Naive thymus-derived CD4-positive, alpha-beta T cell (primary cell): ENCODE measurements at regions of chr3 and their contacts with region 1.

Region 1: DNA sequence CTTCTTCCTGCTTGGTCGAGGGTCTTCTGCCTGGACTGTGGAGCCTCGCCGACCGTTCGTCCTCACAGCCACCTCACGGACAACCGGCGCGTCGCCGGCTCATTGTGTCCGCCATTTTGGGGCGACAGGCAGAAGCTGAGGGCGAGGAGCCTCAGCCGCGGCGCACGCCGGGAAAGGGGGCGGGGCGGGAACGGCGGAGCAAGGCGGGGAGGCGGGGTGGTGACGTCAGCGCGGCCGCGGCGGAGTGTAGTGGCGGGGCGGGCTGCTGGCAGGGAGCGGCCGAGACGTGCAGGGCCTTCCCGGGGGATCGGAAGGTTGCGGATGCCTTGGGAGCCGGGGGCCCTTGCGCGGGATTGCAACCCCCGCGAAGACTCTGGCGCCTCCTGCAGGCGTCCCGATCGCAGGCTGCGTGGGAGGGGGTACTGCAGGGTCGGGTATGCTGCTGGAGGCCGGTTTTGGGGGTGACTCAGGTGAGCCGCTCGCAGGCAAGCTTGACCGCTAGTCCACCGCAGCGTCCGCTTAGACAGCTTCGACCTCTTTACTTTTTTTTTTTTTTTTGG is at the start of gene WDR82:
- DNase-seq: peak; percentile 92 to 100 (median 96)
- ATAC-seq: peak; percentile 93
- H3K4me3 ChIP-seq: peak within 1 kb of the TSS; percentile 92
- H3K4me3 Mint-ChIP-seq: peak within 1 kb of the TSS; percentile 91 to 99 (median 98)
- H3K27ac ChIP-seq: peak within 1 kb of the TSS; percentile 96
- H3K27ac Mint-ChIP-seq: peak within 1 kb of the TSS; percentile 93 to 99 (median 99)
- H3K4me1 ChIP-seq: peaks cover 41 to 44% of the 10 kb centered on the region in 2 donors
- H3K4me1 Mint-ChIP-seq: peaks cover 37 to 74% (median 71%) of the 10 kb centered on the region in 7 donors
- H3K27me3 ChIP-seq: no peaks in the 10 kb centered on the region
- H3K27me3 Mint-ChIP-seq: no peaks in the 10 kb centered on the region
- total RNA-seq, gene WDR82: 112 to 161 (median 135) TPM

Region 2: DNA sequence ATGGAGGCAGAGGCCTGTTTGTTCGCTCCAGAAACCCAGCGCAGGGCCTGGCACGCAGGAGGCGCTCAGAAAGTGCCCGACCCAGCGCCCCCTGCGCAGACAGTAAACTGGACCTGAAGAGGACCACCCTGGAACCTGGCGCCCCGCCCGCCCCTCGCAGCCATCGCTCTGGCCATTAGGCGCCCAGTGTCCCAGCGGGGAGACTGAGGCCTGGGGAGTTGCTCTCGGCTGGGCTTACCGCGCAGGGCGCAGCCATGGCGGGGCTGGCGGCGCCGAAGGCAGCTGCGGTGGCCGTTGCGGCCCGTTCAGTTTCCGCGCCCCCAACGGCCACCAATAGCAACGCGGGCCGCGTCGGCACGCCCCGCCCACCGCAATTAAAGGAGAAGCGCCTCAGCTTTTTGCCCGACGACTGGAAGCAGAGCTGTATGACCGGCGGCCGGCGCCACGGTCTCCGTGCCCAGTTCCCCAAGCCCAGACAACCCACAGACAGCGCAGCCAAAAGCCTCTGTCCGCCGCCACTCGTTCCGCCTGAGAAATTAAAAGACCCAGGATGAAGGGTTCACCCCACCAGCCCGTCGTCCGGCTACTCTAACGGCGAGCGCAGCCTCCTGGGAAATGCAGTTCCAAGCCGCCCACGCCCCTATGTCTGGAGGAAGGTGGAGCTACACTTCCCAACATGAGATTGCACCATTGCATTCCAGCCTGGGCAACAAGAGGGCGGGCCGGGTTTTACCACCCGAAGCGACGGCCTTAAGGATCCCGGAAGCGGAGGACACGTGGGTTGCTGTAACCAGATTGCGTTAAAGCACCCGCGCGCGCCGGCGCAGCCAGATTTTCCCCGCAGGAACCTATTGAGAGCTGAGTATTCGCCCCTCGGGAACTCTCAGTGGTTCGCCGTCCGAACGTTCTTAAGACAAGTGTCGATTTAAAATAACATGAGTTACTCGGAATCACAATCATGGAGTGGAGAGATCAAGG is 124.2 kb before region 1 on chr3 and contains the start of gene POC1A:
- CTCF ChIA-PET with region 1: no interaction called
- POLR2A ChIA-PET with region 1: no interaction called
- intact Hi-C with region 1: loop called in 1 of 2 experiments (anchors 2 kb)
- DNase-seq: peak; percentile 73 to 90 (median 82)
- ATAC-seq: peak; percentile 92
- H3K4me3 ChIP-seq: peak within 1 kb of the TSS; percentile 98
- H3K4me3 Mint-ChIP-seq: peak within 1 kb of the TSS; percentile 88 to 98 (median 96)
- H3K27ac ChIP-seq: peak within 1 kb of the TSS; percentile 85
- H3K27ac Mint-ChIP-seq: peak within 1 kb of the TSS; percentile 87 to 98 (median 94)
- H3K4me1 ChIP-seq: peaks cover 4 to 6% of the 10 kb centered on the region in 2 donors
- H3K4me1 Mint-ChIP-seq: peaks cover 5 to 22% (median 6%) of the 10 kb centered on the region in 7 donors
- H3K27me3 ChIP-seq: no peaks in the 10 kb centered on the region
- H3K27me3 Mint-ChIP-seq: peaks cover 0 to 1% (median 0%) of the 10 kb centered on the region in 5 donors
- total RNA-seq, gene POC1A: 0.58 to 19.7 (median 1.2) TPM

Region 3: DNA sequence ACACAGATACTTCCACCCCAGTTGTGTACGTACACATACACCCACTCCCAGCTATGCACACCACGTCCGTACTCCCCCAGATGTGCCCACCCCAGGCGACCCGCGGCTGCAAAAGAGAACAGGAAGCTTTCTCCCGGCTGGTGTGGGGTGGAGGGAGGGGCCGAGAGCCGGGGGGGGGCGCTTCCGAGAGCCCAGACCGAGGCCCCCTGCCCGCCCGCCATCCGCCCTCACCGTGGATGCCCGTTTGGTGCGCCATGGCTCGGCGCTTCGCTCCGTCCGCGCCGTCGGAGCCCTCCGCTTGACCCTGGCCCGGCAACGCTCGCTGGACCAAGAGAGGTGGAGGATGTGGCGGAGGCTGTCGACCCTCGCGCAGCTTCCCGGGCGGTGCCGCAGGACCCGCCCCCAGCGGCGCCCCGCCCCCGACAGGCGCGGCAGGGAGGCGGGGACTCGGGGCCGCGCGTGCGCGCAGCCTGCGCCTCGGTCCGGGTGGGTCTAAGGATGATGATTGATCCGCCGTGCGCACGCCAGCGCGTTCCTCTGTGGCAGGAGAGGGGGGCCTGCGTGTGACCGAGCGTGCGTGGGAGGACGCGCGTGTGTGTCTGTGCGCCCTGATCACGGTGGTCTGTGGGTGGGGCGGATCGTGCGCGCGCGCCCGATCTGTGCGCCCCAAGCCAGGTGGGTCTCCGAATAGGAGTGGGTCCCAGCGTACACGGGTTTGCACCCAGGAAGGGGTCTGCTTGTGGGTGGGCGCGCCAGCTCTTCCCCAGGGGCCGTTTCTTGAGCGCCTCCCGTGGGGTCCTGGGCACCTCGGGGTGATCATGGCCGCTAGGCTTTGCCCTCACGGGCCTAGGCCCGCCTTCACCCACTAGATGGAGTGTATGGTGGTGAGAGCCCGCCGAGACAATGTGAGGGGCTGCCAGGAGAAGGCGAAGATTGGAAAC is 39.6 kb before region 1 on chr3 and contains the start of gene TWF2:
- CTCF ChIA-PET with region 1: interaction called, 126 read pairs
- POLR2A ChIA-PET with region 1: interaction called, 1,418 read pairs
- intact Hi-C with region 1: loop called (anchors 1 kb)
- DNase-seq: peak; percentile 87 to 96 (median 91)
- ATAC-seq: peak; percentile 91
- H3K4me3 ChIP-seq: peak within 1 kb of the TSS; percentile 92
- H3K4me3 Mint-ChIP-seq: peak within 1 kb of the TSS; percentile 86 to 100 (median 96)
- H3K27ac ChIP-seq: peak within 1 kb of the TSS; percentile 95
- H3K27ac Mint-ChIP-seq: peak within 1 kb of the TSS; percentile 83 to 99 (median 97)
- H3K4me1 ChIP-seq: peaks cover 59 to 62% of the 10 kb centered on the region in 2 donors
- H3K4me1 Mint-ChIP-seq: peaks cover 59 to 88% (median 76%) of the 10 kb centered on the region in 7 donors
- H3K27me3 ChIP-seq: no peaks in the 10 kb centered on the region
- H3K27me3 Mint-ChIP-seq: no peaks in the 10 kb centered on the region
- total RNA-seq, gene TWF2: 38.7 to 110 (median 63.7) TPM

Region 4: DNA sequence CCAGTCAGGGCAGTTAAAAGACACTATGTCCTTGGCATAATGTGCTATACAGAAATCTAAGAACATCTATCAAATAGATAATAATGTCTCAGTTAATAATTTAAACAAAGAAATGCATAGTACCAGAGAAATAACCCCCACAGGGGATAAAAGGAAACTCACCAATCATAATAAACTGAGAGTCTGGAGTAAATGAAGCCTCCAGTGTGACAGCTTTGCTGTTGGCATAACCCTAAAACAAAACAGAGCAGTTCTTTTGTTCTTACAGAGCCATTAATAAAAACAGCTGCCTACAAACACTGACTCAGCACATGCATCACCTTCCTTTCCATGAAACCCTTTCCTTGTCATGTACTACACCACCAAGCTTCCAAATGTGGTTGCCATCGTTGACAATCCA is 19.6 kb before region 1 on chr3:
- CTCF ChIA-PET with region 1: interaction called, 33 read pairs
- POLR2A ChIA-PET with region 1: interaction called, 1,418 read pairs
- intact Hi-C with region 1: no loop called
- DNase-seq: no peak
- ATAC-seq: no peak
- H3K4me3 ChIP-seq: no peak overlapping the region
- H3K4me3 Mint-ChIP-seq: peak overlapping the region in 5 of 10 donors; percentile 23 to 84 (median 27)
- H3K27ac ChIP-seq: peak overlapping the region; percentile 87
- H3K27ac Mint-ChIP-seq: peak overlapping the region; percentile 75 to 99 (median 92)
- H3K4me1 ChIP-seq: peaks cover 47 to 90% of the 10 kb centered on the region in 2 donors
- H3K4me1 Mint-ChIP-seq: peaks cover 61 to 100% (median 93%) of the 10 kb centered on the region in 7 donors
- H3K27me3 ChIP-seq: no peaks in the 10 kb centered on the region
- H3K27me3 Mint-ChIP-seq: no peaks in the 10 kb centered on the region

Region 5: DNA sequence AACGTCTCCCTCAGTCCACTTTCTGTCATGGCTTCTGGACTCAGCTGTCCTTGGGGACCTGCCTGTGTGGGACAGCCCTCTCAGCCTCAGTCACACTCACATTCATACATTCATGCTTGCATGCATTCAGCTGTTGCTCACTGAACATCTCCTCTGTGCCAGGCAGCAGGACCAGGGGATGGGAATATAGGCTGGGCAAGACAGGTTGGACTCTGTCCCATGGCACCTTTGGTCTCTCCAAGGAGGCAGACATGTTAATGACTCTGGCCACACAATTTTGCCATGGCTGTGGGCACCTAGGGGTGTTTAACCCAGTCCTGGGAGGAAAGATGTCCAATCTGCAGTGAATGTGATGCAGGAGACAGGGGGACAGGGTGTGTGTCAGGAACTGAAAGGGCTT is 29.7 kb after region 1 on chr3:
- CTCF ChIA-PET with region 1: no interaction called
- POLR2A ChIA-PET with region 1: no interaction called
- intact Hi-C with region 1: no loop called
- DNase-seq: no peak
- ATAC-seq: no peak
- H3K4me3 ChIP-seq: no peak overlapping the region
- H3K4me3 Mint-ChIP-seq: no peak overlapping the region
- H3K27ac ChIP-seq: no peak overlapping the region
- H3K27ac Mint-ChIP-seq: peak overlapping the region in 2 of 9 donors; percentile 3 to 54
- H3K4me1 ChIP-seq: peaks cover 18 to 19% of the 10 kb centered on the region in 2 donors
- H3K4me1 Mint-ChIP-seq: peaks cover 21 to 43% (median 36%) of the 10 kb centered on the region in 7 donors
- H3K27me3 ChIP-seq: no peaks in the 10 kb centered on the region
- H3K27me3 Mint-ChIP-seq: no peaks in the 10 kb centered on the region

Region 6: GRCh38 chr3:52339612-52340011 is 61.0 kb after region 1 on chr3:
- CTCF ChIA-PET with region 1: interaction called, 14 read pairs
- POLR2A ChIA-PET with region 1: no interaction called
- intact Hi-C with region 1: no loop called
- DNase-seq: peak in 7 of 9 donors; percentile 67 to 85 (median 76)
- ATAC-seq: peak; percentile 92
- H3K4me3 ChIP-seq: no peak overlapping the region
- H3K4me3 Mint-ChIP-seq: no peak overlapping the region
- H3K27ac ChIP-seq: no peak overlapping the region
- H3K27ac Mint-ChIP-seq: peak overlapping the region in 7 of 9 donors; percentile 1 to 78 (median 40)
- H3K4me1 ChIP-seq: no peaks in the 10 kb centered on the region
- H3K4me1 Mint-ChIP-seq: peaks cover 7 to 16% (median 8%) of the 10 kb centered on the region in 7 donors
- H3K27me3 ChIP-seq: no peaks in the 10 kb centered on the region
- H3K27me3 Mint-ChIP-seq: no peaks in the 10 kb centered on the region

Region 7: GRCh38 chr3:52350416-52350815 is 71.8 kb after region 1 on chr3:
- CTCF ChIA-PET with region 1: no interaction called
- POLR2A ChIA-PET with region 1: no interaction called
- intact Hi-C with region 1: no loop called
- DNase-seq: no peak
- ATAC-seq: no peak
- H3K4me3 ChIP-seq: no peak overlapping the region
- H3K4me3 Mint-ChIP-seq: no peak overlapping the region
- H3K27ac ChIP-seq: no peak overlapping the region
- H3K27ac Mint-ChIP-seq: no peak overlapping the region
- H3K4me1 ChIP-seq: no peaks in the 10 kb centered on the region
- H3K4me1 Mint-ChIP-seq: no peaks in the 10 kb centered on the region
- H3K27me3 ChIP-seq: no peaks in the 10 kb centered on the region
- H3K27me3 Mint-ChIP-seq: no peaks in the 10 kb centered on the region

Region 8: GRCh38 chr3:52685709-52686691 is 407.4 kb after region 1 on chr3 and contains the starts of genes GNL3 and PBRM1:
- CTCF ChIA-PET with region 1: no interaction called
- POLR2A ChIA-PET with region 1: no interaction called
- intact Hi-C with region 1: loop called in 1 of 2 experiments (anchors 10 kb)
- DNase-seq: peak; percentile 87 to 94 (median 92)
- ATAC-seq: peak; percentile 96
- H3K4me3 ChIP-seq: peak within 1 kb of the TSS; percentile 80
- H3K4me3 Mint-ChIP-seq: peak within 1 kb of the TSS; percentile 95 to 99 (median 98)
- H3K27ac ChIP-seq: peak within 1 kb of the TSS; percentile 89
- H3K27ac Mint-ChIP-seq: peak within 1 kb of the TSS; percentile 93 to 99 (median 98)
- H3K4me1 ChIP-seq: peaks cover 21 to 25% of the 10 kb centered on the region in 2 donors
- H3K4me1 Mint-ChIP-seq: peaks cover 23 to 72% (median 62%) of the 10 kb centered on the region in 7 donors
- H3K27me3 ChIP-seq: no peaks in the 10 kb centered on the region
- H3K27me3 Mint-ChIP-seq: no peaks in the 10 kb centered on the region
- total RNA-seq, gene GNL3: 87.9 to 116 (median 97.2) TPM
- total RNA-seq, gene PBRM1: 58.4 to 83.8 (median 74.2) TPM